MCF 10A (cell line): ENCODE measurements at regions of chr1 and their contacts with region 1.

Region 1: DNA sequence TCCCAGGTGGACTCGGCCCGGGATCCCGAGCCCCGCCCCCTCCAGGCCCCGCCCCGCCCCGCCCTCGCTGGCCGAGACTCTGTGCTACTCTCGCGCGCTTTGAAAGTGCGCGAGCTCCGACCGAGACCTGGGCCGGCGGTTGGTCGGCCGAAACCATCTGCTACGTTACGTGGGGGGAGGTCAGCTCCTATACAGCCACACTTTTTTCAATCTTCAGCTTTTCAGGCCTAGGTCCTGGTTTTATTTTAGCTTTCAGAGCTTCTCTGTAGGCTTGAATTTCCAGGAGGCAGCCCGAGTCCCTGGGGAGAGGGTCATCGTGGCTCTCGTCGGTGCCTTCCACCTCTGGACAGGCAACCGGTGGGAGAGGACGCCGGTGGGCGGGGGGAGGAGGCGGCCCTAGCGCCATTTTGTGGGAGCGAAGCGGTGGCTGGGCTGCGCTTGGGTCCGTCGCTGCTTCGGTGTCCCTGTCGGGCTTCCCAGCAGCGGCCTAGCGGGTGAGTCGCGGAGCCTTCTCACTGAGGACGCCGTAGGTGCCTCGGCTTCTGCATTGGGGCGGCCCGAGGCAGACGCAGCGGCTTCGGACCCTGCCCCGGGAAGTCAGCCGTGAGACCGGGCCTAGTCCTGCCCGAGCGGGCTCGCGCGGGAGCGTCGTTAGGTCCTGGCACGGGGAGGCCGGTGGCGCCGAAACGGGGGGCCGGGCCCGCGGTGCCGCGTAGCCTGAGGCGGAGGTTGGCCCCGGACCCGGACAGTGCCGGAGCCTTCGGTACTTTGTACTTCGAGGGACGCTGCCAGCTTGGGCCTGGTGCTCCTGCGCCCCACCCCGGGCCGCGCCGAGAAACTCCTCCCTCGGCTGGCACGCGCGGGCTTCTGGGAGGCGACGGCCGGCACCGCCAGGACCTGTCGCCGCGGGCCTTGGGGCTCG is at the start of gene TARDBP:
- DNase-seq: peak; percentile 89
- H3K4me3 Mint-ChIP-seq: peak within 1 kb of the TSS; percentile 83
- H3K27ac Mint-ChIP-seq: peak within 1 kb of the TSS; percentile 100
- H3K4me1 Mint-ChIP-seq: no peaks in the 10 kb centered on the region
- H3K27me3 Mint-ChIP-seq: no peaks in the 10 kb centered on the region
- CTCF ChIP-seq: no peak
- total RNA-seq, gene TARDBP: 144 and 172 TPM in 2 replicates

Region 2: DNA sequence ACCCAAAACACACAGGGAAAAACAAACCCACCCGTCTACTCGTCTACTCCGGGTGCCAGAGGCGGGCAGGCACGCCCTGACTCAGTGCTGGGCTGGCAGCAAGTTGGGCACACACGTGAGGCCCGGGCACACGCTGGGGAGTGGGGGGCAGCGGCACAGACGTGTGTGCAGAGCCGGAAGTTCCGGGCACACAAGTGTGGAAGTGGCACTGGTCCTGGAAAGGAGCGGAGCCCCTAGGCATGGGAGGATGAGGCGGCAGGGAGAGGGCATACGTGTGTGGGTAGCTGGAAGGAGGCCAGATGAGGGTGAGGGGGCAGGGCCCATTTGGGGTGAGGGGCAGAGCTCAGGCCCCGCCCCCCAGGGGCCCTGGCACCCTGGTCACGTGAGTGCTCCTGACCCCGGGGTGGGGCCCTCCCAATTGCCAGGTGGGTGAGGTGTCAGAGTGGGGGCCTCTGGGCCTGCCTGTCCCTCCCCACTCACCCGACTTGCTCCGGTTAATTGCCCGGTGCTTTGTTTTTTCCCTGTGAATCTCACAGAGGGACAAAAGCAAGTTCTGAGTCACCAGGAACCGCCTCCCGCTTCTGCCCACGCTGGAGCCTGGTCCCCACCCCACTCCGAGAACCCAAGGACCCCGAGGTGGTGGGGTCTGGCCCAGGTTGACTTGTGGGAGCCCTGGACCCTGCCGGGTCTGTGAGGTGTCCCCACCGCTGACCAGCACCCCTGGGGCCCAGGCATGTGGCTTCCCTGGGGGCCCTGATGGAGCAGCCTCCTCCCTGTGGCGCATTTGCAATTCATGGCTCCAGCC is 111.2 kb before region 1 on chr1:
- CTCF ChIA-PET with region 1: no interaction called
- POLR2A ChIA-PET with region 1: interaction called, 17 read pairs
- intact Hi-C with region 1: no loop called
- DNase-seq: peak; percentile 63
- H3K4me3 Mint-ChIP-seq: peak overlapping the region; percentile 72
- H3K27ac Mint-ChIP-seq: peak overlapping the region; percentile 93
- H3K4me1 Mint-ChIP-seq: peaks cover 43% of the 10 kb centered on the region
- H3K27me3 Mint-ChIP-seq: no peaks in the 10 kb centered on the region
- CTCF ChIP-seq: no peak

Region 3: GRCh38 chr1:10980094-10980577 is 32.4 kb before region 1 on chr1:
- CTCF ChIA-PET with region 1: interaction called, 4 read pairs
- POLR2A ChIA-PET with region 1: interaction called, 23 read pairs
- intact Hi-C with region 1: loop called (anchors 5 kb)
- DNase-seq: peak; percentile 86
- H3K4me3 Mint-ChIP-seq: peak overlapping the region; percentile 54
- H3K27ac Mint-ChIP-seq: no peak overlapping the region
- H3K4me1 Mint-ChIP-seq: peaks cover 35% of the 10 kb centered on the region
- H3K27me3 Mint-ChIP-seq: no peaks in the 10 kb centered on the region
- CTCF ChIP-seq: peak; percentile 22

Region 4: DNA sequence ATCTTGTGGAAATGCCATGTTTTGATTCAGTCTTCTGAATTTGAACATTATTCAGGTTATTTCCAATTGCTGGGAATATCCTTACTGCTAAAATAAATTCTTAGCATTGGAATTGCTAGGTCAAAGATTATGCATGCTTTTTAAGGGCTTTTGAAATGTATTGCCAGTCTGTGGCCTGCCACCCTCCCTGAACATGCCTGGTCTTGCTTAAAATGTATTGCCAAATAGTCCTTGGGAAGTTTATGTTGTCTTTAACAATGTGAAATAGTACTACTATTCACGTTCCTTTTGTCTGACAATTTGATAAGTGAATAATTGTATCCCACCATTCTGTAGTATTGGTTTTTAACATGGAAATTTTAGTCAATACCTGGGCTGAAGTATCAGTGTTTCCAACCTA is 13.5 kb after region 1 on chr1:
- CTCF ChIA-PET with region 1: interaction called, 3 read pairs
- POLR2A ChIA-PET with region 1: interaction called, 13 read pairs
- intact Hi-C with region 1: no loop called
- DNase-seq: peak; percentile 32
- H3K4me3 Mint-ChIP-seq: no peak overlapping the region
- H3K27ac Mint-ChIP-seq: peak overlapping the region; percentile 89
- H3K4me1 Mint-ChIP-seq: peaks cover 19% of the 10 kb centered on the region
- H3K27me3 Mint-ChIP-seq: no peaks in the 10 kb centered on the region
- CTCF ChIP-seq: no peak